Heart left ventricle (tissue), 16 donors: ENCODE measurements at regions of chr18 and their contacts with region 1.

Region 1: GRCh38 chr18:21997207-21998143 is 171.9 kb upstream of the GATA6 start:
- DNase-seq: no peak
- ATAC-seq: peak; percentile 62 to 77 (median 70)
- H3K4me3 ChIP-seq: no peak overlapping the region
- H3K27ac ChIP-seq: peak overlapping the region in 9 of 12 donors; percentile 42 to 88 (median 67)
- H3K4me1 ChIP-seq: peaks cover 0 to 26% (median 10%) of the 10 kb centered on the region in 12 donors
- H3K27me3 ChIP-seq: no peaks in the 10 kb centered on the region
- CTCF ChIP-seq: peak; percentile 73 to 91 (median 82)
- POLR2A ChIP-seq: no peak

Region 2: GRCh38 chr18:22084547-22084946 is 87.1 kb after region 1 on chr18:
- intact Hi-C with region 1: loop called in 2 of 10 experiments (anchors 5 kb)
- DNase-seq: peak in 4 of 5 donors; percentile 60 to 68 (median 68)
- ATAC-seq: peak; percentile 55 to 86 (median 80)
- H3K4me3 ChIP-seq: no peak overlapping the region
- H3K27ac ChIP-seq: peak overlapping the region in 9 of 12 donors; percentile 49 to 86 (median 62)
- H3K4me1 ChIP-seq: peaks cover 0 to 22% (median 4%) of the 10 kb centered on the region in 12 donors
- H3K27me3 ChIP-seq: no peaks in the 10 kb centered on the region
- CTCF ChIP-seq: no peak
- POLR2A ChIP-seq: no peak

Region 3: GRCh38 chr18:22282311-22283112 is 285.0 kb after region 1 on chr18:
- intact Hi-C with region 1: loop called in 1 of 10 experiments (anchors 10 kb)
- DNase-seq: no peak
- ATAC-seq: peak in 2 of 4 donors; percentile 21 to 33
- H3K4me3 ChIP-seq: no peak overlapping the region
- H3K27ac ChIP-seq: peak overlapping the region in 1 of 12 donors; percentile 66
- H3K4me1 ChIP-seq: peaks cover 0 to 50% (median 15%) of the 10 kb centered on the region in 12 donors
- H3K27me3 ChIP-seq: no peaks in the 10 kb centered on the region
- CTCF ChIP-seq: no peak
- POLR2A ChIP-seq: no peak

Region 4: GRCh38 chr18:22378672-22379282 is 381.3 kb after region 1 on chr18:
- intact Hi-C with region 1: loop called in 2 of 10 experiments (anchors 10 kb)
- DNase-seq: peak in 3 of 5 donors; percentile 25 to 39 (median 26)
- ATAC-seq: peak; percentile 76 to 89 (median 81)
- H3K4me3 ChIP-seq: no peak overlapping the region
- H3K27ac ChIP-seq: no peak overlapping the region
- H3K4me1 ChIP-seq: peaks cover 0 to 4% (median 0%) of the 10 kb centered on the region in 12 donors
- H3K27me3 ChIP-seq: no peaks in the 10 kb centered on the region
- CTCF ChIP-seq: peak; percentile 34 to 66 (median 51)
- POLR2A ChIP-seq: no peak

Region 5: GRCh38 chr18:22465859-22466457 is 468.5 kb after region 1 on chr18:
- intact Hi-C with region 1: loop called in 1 of 10 experiments (anchors 10 kb)
- DNase-seq: peak in 4 of 5 donors; percentile 51 to 71 (median 60)
- ATAC-seq: peak; percentile 92 to 94 (median 94)
- H3K4me3 ChIP-seq: peak overlapping the region in 1 of 12 donors; percentile 1
- H3K27ac ChIP-seq: peak overlapping the region; percentile 65 to 96 (median 86)
- H3K4me1 ChIP-seq: peaks cover 0 to 49% (median 34%) of the 10 kb centered on the region in 12 donors
- H3K27me3 ChIP-seq: no peaks in the 10 kb centered on the region
- CTCF ChIP-seq: no peak
- POLR2A ChIP-seq: peak in 1 of 2 donors; percentile 6